Activated CD4-positive, alpha-beta memory T cell treated with anti-CD3 and anti-CD28 coated beads for 36 hours (primary cell): ENCODE measurements at regions of chr17 and their contacts with region 1.

Region 1: DNA sequence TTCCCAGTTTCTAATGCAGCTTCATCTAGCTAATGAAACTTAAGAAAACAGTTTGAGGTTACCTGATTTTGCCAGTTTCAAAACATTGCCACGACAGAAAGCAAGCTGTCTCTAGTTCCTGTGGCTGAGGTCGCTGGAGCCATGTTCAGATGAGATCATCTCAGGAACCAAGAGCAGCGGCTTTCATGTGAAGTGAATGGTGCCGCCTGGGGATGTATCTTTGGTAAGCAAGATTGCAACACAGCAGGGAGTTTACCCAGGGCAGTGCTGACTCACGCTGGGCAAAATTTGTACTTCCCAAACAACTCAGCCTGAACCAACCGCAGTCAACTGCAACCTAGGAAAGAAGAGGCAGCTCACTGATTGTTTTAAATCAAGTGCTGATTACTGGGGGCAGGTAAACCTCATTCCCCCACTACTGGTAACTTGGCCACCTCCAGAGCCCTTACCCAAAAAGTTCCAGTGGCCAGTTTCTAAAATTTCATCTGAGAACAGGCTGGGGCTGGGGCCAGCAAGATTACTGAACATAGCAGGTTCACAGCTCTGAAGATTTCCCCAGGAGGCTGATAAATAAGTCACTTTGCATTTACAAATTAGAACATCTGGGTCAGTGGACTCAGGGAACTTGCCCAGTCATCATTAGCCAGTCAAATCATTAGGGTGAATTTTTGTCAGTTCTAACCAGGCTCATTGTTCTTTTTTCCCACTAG is at the start of gene RFFL:
- DNase-seq: peak; percentile 95
- H3K4me3 Mint-ChIP-seq: peak within 1 kb of the TSS; percentile 35
- H3K27ac Mint-ChIP-seq: peak within 1 kb of the TSS; percentile 76
- H3K4me1 Mint-ChIP-seq: peaks cover 65% of the 10 kb centered on the region
- H3K27me3 Mint-ChIP-seq: no peaks in the 10 kb centered on the region
- total RNA-seq, gene RFFL: 30.5 to 32.8 TPM

Region 2: GRCh38 chr17:34874478-34874877 is 189.2 kb before region 1 on chr17:
- CTCF ChIA-PET with region 1: no interaction called
- POLR2A ChIA-PET with region 1: no interaction called
- intact Hi-C with region 1: no loop called
- DNase-seq: no peak
- H3K4me3 Mint-ChIP-seq: no peak overlapping the region
- H3K27ac Mint-ChIP-seq: no peak overlapping the region
- H3K4me1 Mint-ChIP-seq: no peaks in the 10 kb centered on the region
- H3K27me3 Mint-ChIP-seq: no peaks in the 10 kb centered on the region

Region 3: GRCh38 chr17:34980681-34981537 is 82.8 kb before region 1 on chr17:
- CTCF ChIA-PET with region 1: interaction called, 3 read pairs
- POLR2A ChIA-PET with region 1: interaction called, 3 read pairs
- intact Hi-C with region 1: loop called (anchors 5 kb)
- DNase-seq: peak; percentile 78
- H3K4me3 Mint-ChIP-seq: peak overlapping the region; percentile 90
- H3K27ac Mint-ChIP-seq: peak overlapping the region; percentile 93
- H3K4me1 Mint-ChIP-seq: peaks cover 52% of the 10 kb centered on the region
- H3K27me3 Mint-ChIP-seq: no peaks in the 10 kb centered on the region

Region 4: DNA sequence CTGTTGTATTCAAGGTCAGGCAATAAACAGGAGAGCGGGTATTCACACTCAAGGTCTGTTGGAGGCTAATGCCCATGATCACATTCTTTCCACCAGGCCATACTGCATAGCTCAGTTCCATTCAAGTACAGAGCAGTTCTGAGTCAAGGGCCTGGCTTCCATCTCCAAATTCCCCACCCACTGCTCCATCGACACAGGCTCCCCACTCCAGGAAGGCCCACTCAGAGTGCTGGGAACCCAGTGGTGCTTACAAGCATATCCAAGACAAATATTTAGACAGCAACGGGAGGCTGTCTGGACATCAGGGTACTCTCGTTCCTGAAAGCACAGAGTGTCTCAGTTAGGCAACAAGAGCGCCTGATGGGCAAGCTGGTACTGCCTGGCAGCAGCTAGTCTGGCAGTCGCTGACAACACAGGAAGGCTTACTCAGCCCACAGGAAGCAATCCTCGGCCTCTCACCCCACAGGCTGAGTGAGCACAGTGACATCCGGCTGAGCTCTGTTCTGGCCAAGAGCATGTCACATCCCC is 41.1 kb before region 1 on chr17:
- CTCF ChIA-PET with region 1: interaction called, 13 read pairs
- POLR2A ChIA-PET with region 1: interaction called, 22 read pairs
- intact Hi-C with region 1: loop called (anchors 1 kb)
- DNase-seq: peak; percentile 90
- H3K4me3 Mint-ChIP-seq: peak overlapping the region; percentile 81
- H3K27ac Mint-ChIP-seq: peak overlapping the region; percentile 100
- H3K4me1 Mint-ChIP-seq: peaks cover 46% of the 10 kb centered on the region
- H3K27me3 Mint-ChIP-seq: no peaks in the 10 kb centered on the region

Region 5: GRCh38 chr17:35046740-35047283 is 16.9 kb before region 1 on chr17:
- CTCF ChIA-PET with region 1: interaction called, 14 read pairs
- POLR2A ChIA-PET with region 1: interaction called, 36 read pairs
- intact Hi-C with region 1: loop called (anchors 1 kb)
- DNase-seq: peak; percentile 82
- H3K4me3 Mint-ChIP-seq: peak overlapping the region; percentile 72
- H3K27ac Mint-ChIP-seq: peak overlapping the region; percentile 94
- H3K4me1 Mint-ChIP-seq: peaks cover 69% of the 10 kb centered on the region
- H3K27me3 Mint-ChIP-seq: no peaks in the 10 kb centered on the region

Region 6: DNA sequence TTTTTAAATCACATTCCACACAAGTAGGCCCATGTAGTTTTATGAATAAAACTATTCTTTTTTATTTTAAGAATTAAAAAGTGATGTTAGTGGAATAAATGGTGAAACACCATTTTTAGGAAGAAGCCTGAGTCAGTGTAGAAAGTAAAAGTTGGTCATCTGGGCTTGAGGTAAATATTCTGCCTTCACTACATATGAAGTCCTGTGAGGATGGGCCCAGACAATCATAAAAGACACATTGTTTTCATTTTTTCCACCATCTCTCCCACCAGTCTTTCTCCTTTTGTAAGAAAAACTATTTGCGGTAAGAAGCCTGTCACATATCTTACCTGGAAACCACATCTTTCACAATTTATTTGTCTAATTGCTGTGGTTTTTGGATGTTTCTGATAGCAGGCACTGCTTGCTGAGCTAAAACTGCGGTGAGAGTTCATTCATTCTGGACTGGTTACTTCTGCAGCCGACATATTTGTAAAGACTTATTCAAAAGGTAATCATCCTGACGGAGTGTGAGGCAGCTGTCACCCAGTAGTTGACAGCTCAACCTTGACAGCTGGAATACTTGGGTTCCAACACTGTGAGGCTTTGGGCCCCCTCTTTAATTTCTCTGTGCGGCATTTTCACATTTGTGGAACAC is 10.4 kb after region 1 on chr17:
- CTCF ChIA-PET with region 1: interaction called, 13 read pairs
- POLR2A ChIA-PET with region 1: interaction called, 41 read pairs
- intact Hi-C with region 1: loop called (anchors 1 kb)
- DNase-seq: peak; percentile 35
- H3K4me3 Mint-ChIP-seq: peak overlapping the region; percentile 44
- H3K27ac Mint-ChIP-seq: peak overlapping the region; percentile 85
- H3K4me1 Mint-ChIP-seq: peaks cover 69% of the 10 kb centered on the region
- H3K27me3 Mint-ChIP-seq: no peaks in the 10 kb centered on the region

Region 7: GRCh38 chr17:35082073-35082657 is 18.5 kb after region 1 on chr17:
- CTCF ChIA-PET with region 1: interaction called, 18 read pairs
- POLR2A ChIA-PET with region 1: interaction called, 27 read pairs
- intact Hi-C with region 1: loop called (anchors 2 kb)
- DNase-seq: no peak
- H3K4me3 Mint-ChIP-seq: peak overlapping the region; percentile 5
- H3K27ac Mint-ChIP-seq: peak overlapping the region; percentile 84
- H3K4me1 Mint-ChIP-seq: peaks cover 80% of the 10 kb centered on the region
- H3K27me3 Mint-ChIP-seq: no peaks in the 10 kb centered on the region